ENCODE measurements at regions of chr19 and their contacts with region 1.

Region 1: GRCh38 chr19:18588611-18589379 is at the start of gene REX1BD:
- DNase-seq: no peak
- H3K4me3 ChIP-seq: peak within 1 kb of the TSS; percentile 76
- H3K27me3 ChIP-seq: no peaks in the 10 kb centered on the region
- CTCF ChIP-seq: peak; percentile 89
- polyA plus RNA-seq, gene REX1BD: 22.4 and 24.3 TPM in 2 replicates

Region 2: GRCh38 chr19:18469069-18469846 is 119.5 kb before region 1 on chr19:
- CTCF ChIA-PET with region 1: interaction called, 12 read pairs
- POLR2A ChIA-PET with region 1: no interaction called
- DNase-seq: no peak
- H3K4me3 ChIP-seq: no peak overlapping the region
- H3K27me3 ChIP-seq: no peaks in the 10 kb centered on the region
- CTCF ChIP-seq: peak; percentile 85

Region 3: DNA sequence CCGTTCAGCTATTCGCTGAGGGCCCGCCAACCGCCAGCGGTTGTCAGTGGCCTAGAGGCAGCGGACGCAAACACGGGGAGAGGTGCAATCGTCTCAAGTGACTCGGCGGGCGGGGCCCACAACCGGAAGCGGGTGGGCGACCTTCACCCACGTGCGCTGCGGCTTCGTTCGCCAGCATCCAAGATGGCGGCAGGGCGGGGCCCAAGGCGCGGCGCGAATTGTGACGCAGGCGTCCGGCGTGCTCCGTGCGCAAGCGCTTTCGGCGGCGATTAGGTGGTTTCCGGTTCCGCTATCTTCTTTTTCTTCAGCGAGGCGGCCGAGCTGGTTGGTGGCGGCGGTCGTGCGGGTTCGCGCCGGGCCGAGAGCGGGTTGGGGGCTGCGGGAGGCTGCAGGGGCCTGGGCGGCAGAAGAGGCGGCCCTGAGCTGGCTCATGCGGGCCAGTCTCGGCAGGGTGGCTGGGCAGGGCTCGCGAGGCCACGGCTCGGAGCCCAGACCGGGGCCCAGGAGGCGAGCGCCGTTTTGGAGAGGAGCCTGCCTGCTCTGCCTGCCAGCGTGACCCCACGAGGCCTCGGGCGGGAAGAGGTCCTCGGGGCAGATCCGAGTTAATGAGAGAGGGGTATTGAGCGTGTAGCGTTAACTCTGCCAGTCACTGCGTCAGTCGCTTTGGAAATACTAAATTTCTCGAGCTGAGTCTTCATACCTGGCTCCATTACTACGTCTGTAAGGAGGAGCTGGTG is 17.1 kb before region 1 on chr19 and contains the start of gene UBA52:
- CTCF ChIA-PET with region 1: interaction called, 37 read pairs
- POLR2A ChIA-PET with region 1: no interaction called
- DNase-seq: peak; percentile 79
- H3K4me3 ChIP-seq: peak within 1 kb of the TSS; percentile 81
- H3K27me3 ChIP-seq: no peaks in the 10 kb centered on the region
- CTCF ChIP-seq: no peak
- polyA plus RNA-seq, gene UBA52: 2,336 and 2,472 TPM in 2 replicates

Region 4: DNA sequence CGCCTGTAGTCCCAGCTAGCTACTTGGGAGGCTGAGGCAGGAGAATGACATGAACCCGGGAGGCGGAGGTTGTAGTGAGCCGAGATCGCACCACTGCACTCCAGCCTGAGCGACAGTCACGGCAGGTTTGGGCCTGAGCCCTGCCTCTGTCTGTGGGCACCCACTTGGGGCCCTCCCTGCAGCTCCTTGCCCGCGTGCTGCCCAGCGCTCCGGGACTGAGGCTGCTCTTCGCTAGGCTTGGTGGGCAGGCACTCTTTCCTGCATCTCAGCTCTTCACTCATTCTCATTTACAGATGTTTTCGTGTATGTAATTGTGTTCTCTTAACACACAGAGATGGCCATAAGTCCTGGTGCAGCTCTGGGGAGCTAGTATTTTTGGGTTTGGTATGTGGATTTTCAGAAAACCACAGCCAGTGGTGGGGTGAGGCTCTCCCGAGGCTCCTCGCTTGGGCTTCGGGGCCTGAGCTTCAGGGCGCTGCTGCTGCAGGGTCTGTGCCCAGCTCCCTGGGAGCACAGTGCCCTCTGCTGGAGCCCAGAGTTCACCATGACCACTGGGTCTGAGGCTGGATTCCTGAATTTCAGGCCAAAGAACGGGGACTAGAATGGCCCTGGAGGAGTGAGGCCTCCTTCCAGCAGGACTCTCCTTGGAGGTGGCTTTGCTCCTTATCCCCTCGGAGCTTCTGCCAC is 258.2 kb after region 1 on chr19:
- CTCF ChIA-PET with region 1: interaction called, 40 read pairs
- POLR2A ChIA-PET with region 1: no interaction called
- DNase-seq: no peak
- H3K4me3 ChIP-seq: no peak overlapping the region
- H3K27me3 ChIP-seq: no peaks in the 10 kb centered on the region
- CTCF ChIP-seq: peak; percentile 95